WTC11 (cell line): ENCODE measurements at regions of chr14 and their contacts with region 1.

Region 1: GRCh38 chr14:23478111-23478759 is 8.7 kb downstream of the NGDN start:
- DNase-seq: peak; percentile 49
- ATAC-seq: no peak
- H3K4me3 Mint-ChIP-seq: no peak overlapping the region
- H3K27ac Mint-ChIP-seq: no peak overlapping the region
- H3K4me1 Mint-ChIP-seq: peaks cover 24% of the 10 kb centered on the region
- H3K27me3 Mint-ChIP-seq: no peaks in the 10 kb centered on the region
- CTCF ChIP-seq: peak; percentile 59

Region 2: DNA sequence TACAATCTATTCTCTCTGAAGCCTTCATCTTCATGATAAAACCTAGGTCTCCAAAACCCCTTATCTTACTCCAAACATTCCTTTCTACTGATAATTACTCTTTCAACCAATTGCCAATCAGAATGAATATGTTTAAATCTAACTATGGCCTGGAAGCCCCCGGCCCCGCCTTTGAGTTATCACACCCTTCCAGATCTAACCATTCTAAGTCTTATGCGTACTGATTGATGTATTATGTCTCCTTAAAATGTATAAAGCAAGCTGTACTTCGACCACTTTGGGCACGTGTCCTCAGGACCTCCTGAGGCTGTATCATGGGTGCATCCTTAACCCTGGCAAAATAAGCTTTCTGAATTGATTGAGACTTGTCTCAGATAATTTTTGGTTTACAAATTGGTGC is 142.6 kb before region 1 on chr14:
- CTCF ChIA-PET with region 1: no interaction called
- POLR2A ChIA-PET with region 1: no interaction called
- DNase-seq: no peak
- ATAC-seq: no peak
- H3K4me3 Mint-ChIP-seq: no peak overlapping the region
- H3K27ac Mint-ChIP-seq: no peak overlapping the region
- H3K4me1 Mint-ChIP-seq: no peaks in the 10 kb centered on the region
- H3K27me3 Mint-ChIP-seq: peaks cover 42% of the 10 kb centered on the region
- CTCF ChIP-seq: no peak

Region 3: GRCh38 chr14:23494223-23494622 is 16.0 kb after region 1 on chr14:
- CTCF ChIA-PET with region 1: interaction called, 19 read pairs
- POLR2A ChIA-PET with region 1: no interaction called
- DNase-seq: peak; percentile 44
- ATAC-seq: peak; percentile 99
- H3K4me3 Mint-ChIP-seq: peak overlapping the region; percentile 37; the same call in 1 of the 2 replicates
- H3K27ac Mint-ChIP-seq: peak overlapping the region; percentile 95
- H3K4me1 Mint-ChIP-seq: peaks cover 30% of the 10 kb centered on the region
- H3K27me3 Mint-ChIP-seq: no peaks in the 10 kb centered on the region
- CTCF ChIP-seq: no peak

Region 4: DNA sequence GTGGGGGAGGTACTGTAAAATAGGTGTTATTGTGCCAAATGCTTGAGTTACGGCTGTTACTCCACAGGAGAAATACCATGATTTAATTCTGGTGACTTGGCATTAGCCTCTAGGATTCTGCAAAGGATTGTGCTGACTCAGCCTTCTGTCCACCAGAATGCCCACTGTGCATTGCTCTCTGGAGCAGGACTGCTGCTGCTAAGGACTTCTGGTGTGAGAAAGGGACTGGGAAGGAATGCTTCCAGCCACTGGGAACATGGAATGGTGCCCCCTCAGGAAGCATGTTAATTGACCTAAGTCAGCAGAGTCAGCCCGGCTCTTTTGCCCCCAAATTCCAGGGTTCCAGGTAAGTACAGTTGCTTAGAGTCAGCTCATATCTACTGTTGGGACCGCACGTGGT is 40.5 kb after region 1 on chr14:
- CTCF ChIA-PET with region 1: interaction called, 12 read pairs
- POLR2A ChIA-PET with region 1: interaction called, 7 read pairs
- DNase-seq: no peak
- ATAC-seq: peak; percentile 66
- H3K4me3 Mint-ChIP-seq: no peak overlapping the region
- H3K27ac Mint-ChIP-seq: no peak overlapping the region
- H3K4me1 Mint-ChIP-seq: peaks cover 55% of the 10 kb centered on the region
- H3K27me3 Mint-ChIP-seq: peaks cover 38% of the 10 kb centered on the region
- CTCF ChIP-seq: no peak

Region 5: GRCh38 chr14:23539248-23540140 is 61.3 kb after region 1 on chr14:
- CTCF ChIA-PET with region 1: interaction called, 181 read pairs
- POLR2A ChIA-PET with region 1: interaction called, 73 read pairs
- DNase-seq: peak; percentile 77
- ATAC-seq: peak; percentile 22
- H3K4me3 Mint-ChIP-seq: peak overlapping the region; percentile 83
- H3K27ac Mint-ChIP-seq: peak overlapping the region; percentile 100
- H3K4me1 Mint-ChIP-seq: peaks cover 57% of the 10 kb centered on the region
- H3K27me3 Mint-ChIP-seq: no peaks in the 10 kb centered on the region
- CTCF ChIP-seq: peak; percentile 83

Region 6: GRCh38 chr14:23567192-23568020 is 89.2 kb after region 1 on chr14 and contains the start of gene AP1G2:
- CTCF ChIA-PET with region 1: interaction called, 377 read pairs
- POLR2A ChIA-PET with region 1: interaction called, 5 read pairs
- DNase-seq: peak; percentile 88
- ATAC-seq: peak; percentile 73
- H3K4me3 Mint-ChIP-seq: peak within 1 kb of the TSS; percentile 98
- H3K27ac Mint-ChIP-seq: peak within 1 kb of the TSS; percentile 93
- H3K4me1 Mint-ChIP-seq: peaks cover 38% of the 10 kb centered on the region
- H3K27me3 Mint-ChIP-seq: peaks cover 2% of the 10 kb centered on the region; the same call in 1 of the 2 replicates
- CTCF ChIP-seq: no peak
- total RNA-seq, gene AP1G2: 108 to 122 TPM (median 115 TPM) in 3 replicates